Left colon (tissue), 2 donors: ENCODE measurements at regions of chr13 and their contacts with region 1.

Region 1: GRCh38 chr13:95387733-95388207 is 86.5 kb upstream of the ABCC4 start:
- DNase-seq: peak in 1 of 2 donors; percentile 35
- ATAC-seq: no peak

Region 2: GRCh38 chr13:95296326-95296925 is 91.3 kb before region 1 on chr13:
- intact Hi-C with region 1: loop called in 1 of 2 experiments (anchors 10 kb)
- DNase-seq: peak; percentile 58 to 67
- ATAC-seq: peak; percentile 57

Region 3: DNA sequence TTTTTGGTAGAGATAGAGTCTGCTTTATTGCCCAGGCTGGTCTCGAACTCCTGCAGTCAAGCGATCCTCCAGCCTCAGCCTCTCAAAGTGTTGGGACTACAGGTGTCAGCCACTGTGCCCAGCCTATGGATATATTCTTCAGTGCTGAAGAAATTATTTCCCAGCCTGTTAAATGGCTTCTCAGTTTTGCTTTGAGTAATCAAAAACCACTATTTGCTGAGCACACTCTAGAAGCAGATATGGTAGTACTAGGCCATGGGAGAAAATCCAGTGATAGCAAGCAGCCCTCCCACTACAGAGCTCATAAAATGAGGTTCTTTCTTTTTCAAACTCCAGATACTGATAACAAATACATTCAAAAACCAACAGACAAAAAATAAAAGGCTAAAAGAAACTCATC is 84.2 kb after region 1 on chr13:
- intact Hi-C with region 1: no loop called
- DNase-seq: no peak
- ATAC-seq: no peak

Region 4: DNA sequence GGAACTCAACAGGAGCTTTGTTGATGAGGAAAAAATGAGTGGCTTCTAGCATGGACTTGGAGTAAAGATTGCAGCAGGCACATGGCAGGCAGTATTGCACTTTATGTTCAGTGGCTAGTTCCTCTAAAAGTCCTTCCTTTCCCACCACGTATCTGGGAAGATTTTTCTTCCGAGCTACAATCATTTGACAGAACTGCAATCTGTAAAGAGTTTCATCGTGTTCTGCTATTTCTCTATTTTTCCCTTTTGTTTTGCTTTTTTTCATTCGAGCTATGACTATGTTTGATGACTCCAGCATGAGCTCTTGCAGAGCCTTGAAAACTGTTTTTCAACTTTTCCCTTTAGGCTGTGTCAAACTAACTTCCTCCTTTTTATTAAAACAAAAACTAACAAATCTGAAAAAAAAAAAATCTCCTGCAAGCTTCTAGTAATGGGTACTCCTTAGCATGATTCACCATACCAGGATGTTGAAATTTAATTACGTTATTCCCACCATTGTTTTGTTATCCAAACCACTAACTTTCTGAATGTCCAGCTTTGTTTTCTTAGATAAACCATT is 177.0 kb after region 1 on chr13:
- intact Hi-C with region 1: no loop called
- DNase-seq: no peak
- ATAC-seq: no peak

Region 5: GRCh38 chr13:96314984-96315383 is 927.2 kb after region 1 on chr13:
- intact Hi-C with region 1: no loop called
- DNase-seq: no peak
- ATAC-seq: no peak

Region 6: GRCh38 chr13:96803456-96804100 is 1415.8 kb after region 1 on chr13:
- intact Hi-C with region 1: no loop called
- DNase-seq: no peak
- ATAC-seq: no peak